Endothelial cell of umbilical vein (primary cell): ENCODE measurements at regions of chr1 and their contacts with region 1.

Region 1: DNA sequence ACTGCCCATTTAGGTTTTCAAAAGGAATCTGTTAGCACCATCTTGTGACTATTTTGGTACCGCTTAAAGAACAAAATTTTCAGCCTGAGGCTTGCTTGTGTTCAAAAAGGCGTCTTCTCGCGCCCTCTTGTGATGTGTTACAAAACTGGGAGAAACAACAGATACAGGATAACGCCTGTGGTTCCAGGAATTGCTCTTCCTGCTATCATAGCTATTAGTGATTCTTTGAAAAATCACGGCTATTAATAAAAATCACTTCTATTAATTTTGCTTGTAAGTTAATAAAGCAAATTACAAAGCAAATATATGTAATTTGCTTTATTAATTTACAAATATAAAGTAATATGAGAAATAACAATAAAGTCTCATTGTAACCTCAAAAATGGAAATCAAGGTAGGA is 82.2 kb upstream of the ABCD3 start:
- DNase-seq: peak; percentile 94
- H3K4me3 ChIP-seq: no peak overlapping the region
- H3K27ac ChIP-seq: no peak overlapping the region
- H3K4me1 ChIP-seq: peaks cover 5% of the 10 kb centered on the region
- H3K27me3 ChIP-seq: peaks cover 4 to 5% of the 10 kb centered on the region in 2 experiments
- CTCF ChIP-seq: peak; percentile 73 to 89
- POLR2A ChIP-seq: no peak

Region 2: DNA sequence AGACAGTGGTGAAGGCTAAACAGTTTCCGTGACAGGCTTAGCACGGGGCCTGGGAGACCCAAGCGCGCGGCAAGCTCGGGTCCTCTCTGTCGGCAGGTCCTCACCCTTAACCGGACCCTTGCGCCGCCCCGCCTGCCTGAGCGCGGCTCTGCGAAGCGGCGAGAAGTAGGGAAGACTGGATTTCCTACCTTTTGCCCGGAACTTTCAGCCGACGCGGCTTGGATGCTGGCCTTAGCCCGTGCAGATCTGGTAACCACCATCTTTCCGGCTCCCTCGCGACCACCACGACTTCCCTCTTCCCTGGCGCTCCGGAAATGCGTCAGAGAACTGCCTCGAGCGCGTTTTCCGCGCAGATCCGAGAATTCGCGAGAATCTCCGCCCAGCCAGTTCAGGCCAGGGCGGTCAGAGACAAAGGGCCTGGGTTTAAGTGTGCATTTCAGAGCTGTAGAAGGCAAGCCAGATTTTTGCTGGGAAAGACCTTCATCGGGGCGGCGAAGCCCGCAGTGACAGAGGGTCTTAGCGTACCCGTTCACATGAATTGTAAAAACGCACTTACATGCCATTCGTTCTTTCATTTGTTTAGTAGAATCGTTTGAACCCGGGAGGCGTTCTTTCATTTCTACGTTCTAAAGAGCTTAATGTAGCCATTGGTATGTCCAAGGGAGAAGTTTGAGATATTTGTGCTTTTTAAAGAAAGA is 456.9 kb before region 1 on chr1 and contains the start of gene DNTTIP2:
- CTCF ChIA-PET with region 1: interaction called, 10 read pairs
- POLR2A ChIA-PET with region 1: interaction called, 3 read pairs
- dilution Hi-C with region 1: no loop called
- intact Hi-C with region 1: loop called (anchors 5 kb)
- DNase-seq: peak; percentile 93
- H3K4me3 ChIP-seq: peak within 1 kb of the TSS; percentile 68 to 94 (median 71)
- H3K27ac ChIP-seq: peak within 1 kb of the TSS; percentile 79
- H3K4me1 ChIP-seq: peaks cover 30% of the 10 kb centered on the region
- H3K27me3 ChIP-seq: no peaks in the 10 kb centered on the region
- CTCF ChIP-seq: no peak
- POLR2A ChIP-seq: peak; percentile 90
- total RNA-seq, gene DNTTIP2: 53.7 and 55.5 TPM in 2 replicates

Region 3: DNA sequence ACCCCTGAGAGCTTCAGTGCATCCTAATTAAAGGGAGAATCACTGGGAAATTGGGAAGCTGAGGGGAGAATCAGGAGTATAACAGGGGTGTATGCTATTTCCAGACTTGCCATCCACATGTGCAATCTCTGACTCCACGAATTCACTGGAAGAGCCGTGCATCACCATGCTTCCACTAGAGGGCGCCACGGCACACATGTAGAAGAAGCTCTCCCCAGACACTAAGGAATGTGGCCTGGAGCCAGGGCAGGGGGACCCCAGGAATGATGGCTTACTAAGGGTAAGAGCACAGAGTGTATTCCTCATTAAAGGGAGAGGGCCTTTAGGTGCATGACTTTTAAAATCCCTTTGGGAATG is 296.5 kb before region 1 on chr1:
- CTCF ChIA-PET with region 1: interaction called, 1,439 read pairs
- POLR2A ChIA-PET with region 1: interaction called, 6 read pairs
- dilution Hi-C with region 1: no loop called
- intact Hi-C with region 1: loop called (anchors 1 kb)
- DNase-seq: peak; percentile 88
- H3K4me3 ChIP-seq: no peak overlapping the region
- H3K27ac ChIP-seq: peak overlapping the region; percentile 98
- H3K4me1 ChIP-seq: peaks cover 43% of the 10 kb centered on the region
- H3K27me3 ChIP-seq: no peaks in the 10 kb centered on the region
- CTCF ChIP-seq: peak; percentile 86 to 97
- POLR2A ChIP-seq: no peak

Region 4: DNA sequence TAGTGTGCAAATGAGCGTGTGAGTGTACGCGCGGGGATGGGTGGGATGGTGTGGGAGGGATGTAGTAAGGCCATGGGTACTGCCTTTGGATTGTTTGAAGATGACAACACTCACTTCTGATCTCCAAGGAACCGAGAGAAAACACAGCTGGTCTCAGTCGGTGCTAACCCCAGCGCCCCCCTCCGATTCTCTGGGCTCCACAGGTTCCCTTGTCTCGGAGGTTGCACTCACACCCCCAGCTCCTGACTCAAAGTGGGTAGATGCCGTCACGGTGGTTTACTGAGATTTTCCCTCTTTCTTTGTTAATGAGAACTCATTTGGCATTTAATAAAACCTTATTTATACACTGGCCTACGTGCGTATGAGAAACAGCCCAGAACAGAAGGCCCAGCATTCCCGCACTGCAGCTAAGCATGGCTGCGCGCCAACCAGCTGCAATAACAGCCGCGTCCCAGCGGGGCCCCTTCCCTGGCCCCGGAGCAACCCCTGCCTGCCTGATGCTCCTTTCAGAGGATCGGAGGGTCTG is 240.8 kb before region 1 on chr1:
- CTCF ChIA-PET with region 1: interaction called, 10 read pairs
- POLR2A ChIA-PET with region 1: no interaction called
- dilution Hi-C with region 1: no loop called
- intact Hi-C with region 1: no loop called
- DNase-seq: peak; percentile 97
- H3K4me3 ChIP-seq: no peak overlapping the region
- H3K27ac ChIP-seq: peak overlapping the region; percentile 91
- H3K4me1 ChIP-seq: peaks cover 56% of the 10 kb centered on the region
- H3K27me3 ChIP-seq: no peaks in the 10 kb centered on the region
- CTCF ChIP-seq: no peak
- POLR2A ChIP-seq: peak; percentile 5

Region 5: GRCh38 chr1:94186946-94187345 is 149.0 kb before region 1 on chr1:
- CTCF ChIA-PET with region 1: interaction called, 41 read pairs
- POLR2A ChIA-PET with region 1: no interaction called
- dilution Hi-C with region 1: no loop called
- intact Hi-C with region 1: loop called (anchors 5 kb)
- DNase-seq: no peak
- H3K4me3 ChIP-seq: no peak overlapping the region
- H3K27ac ChIP-seq: peak overlapping the region; percentile 5
- H3K4me1 ChIP-seq: peaks cover 25% of the 10 kb centered on the region
- H3K27me3 ChIP-seq: no peaks in the 10 kb centered on the region
- CTCF ChIP-seq: no peak
- POLR2A ChIP-seq: no peak

Region 6: DNA sequence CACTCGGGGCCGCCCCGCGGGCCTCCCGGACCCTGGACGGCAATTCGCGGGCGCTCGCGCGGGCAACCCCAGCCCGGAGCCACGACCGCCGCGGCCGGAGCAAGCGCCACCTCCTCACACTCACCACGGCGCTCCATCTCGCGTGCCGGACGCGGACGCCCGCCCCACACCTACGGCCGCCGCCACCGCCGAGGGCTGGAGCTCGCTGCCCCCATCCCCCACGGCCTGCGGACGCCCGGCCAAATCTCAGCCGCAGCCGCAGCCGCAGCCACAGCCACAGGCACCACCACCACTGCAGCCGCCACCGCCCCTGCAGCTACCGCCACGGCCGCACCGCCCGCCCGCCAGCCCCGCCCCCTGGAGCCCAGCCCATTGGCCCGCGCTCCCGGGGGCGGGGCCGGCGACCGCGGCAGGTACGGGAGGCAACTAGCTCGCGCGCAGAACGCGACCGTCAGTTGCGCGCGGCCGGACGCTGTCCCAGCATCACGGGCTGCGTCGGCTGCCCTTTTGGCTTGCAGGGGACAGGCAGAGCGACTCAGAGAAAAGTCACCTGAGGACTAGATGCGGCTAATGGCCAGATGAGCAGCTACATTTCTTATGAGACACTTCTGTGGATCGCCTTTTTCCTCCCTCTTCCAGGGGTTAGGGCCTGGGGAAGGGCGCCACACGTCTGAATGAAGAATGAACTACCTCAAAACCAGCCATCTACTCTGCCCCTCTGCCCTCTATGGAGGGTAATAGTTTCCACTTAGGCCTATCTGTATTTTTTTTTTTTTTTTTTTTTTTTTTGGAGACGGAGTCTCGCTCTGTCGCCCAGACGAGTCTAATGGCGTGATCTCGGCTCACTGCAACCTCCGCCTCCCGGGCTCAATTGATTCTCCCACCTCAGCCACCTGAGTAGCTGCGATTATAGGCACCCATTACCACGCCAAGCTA is 98.4 kb before region 1 on chr1 and contains the start of gene ARHGAP29:
- CTCF ChIA-PET with region 1: interaction called, 91 read pairs
- POLR2A ChIA-PET with region 1: interaction called, 6 read pairs
- dilution Hi-C with region 1: no loop called
- intact Hi-C with region 1: no loop called
- DNase-seq: peak; percentile 86
- H3K4me3 ChIP-seq: peak within 1 kb of the TSS; percentile 88 to 100 (median 95)
- H3K27ac ChIP-seq: peak within 1 kb of the TSS; percentile 93
- H3K4me1 ChIP-seq: peaks cover 67% of the 10 kb centered on the region
- H3K27me3 ChIP-seq: no peaks in the 10 kb centered on the region
- CTCF ChIP-seq: no peak
- POLR2A ChIP-seq: peak; percentile 83
- total RNA-seq, gene ARHGAP29: 199 and 215 TPM in 2 replicates

Region 7: DNA sequence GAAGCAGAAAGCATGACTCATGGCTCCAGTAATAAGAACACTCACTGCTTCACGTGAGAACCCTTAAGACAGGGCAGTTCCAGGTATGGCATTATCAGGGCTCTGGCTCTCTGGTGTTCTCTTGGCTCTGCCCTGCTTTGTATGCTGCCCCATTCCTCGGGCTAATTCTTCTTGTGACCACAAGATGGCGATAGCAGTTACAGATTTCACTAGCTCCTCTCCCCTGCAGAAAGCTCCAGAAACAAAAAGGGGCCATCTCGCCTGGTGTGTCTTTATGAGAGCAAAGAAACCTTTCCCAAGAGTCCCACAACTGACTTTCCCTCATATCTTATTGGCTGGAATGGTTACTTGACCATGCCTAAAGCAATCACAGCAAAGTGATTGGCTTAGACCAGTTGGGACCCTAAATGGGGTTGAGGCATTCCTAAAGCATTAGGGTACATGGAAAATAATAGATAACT is 145.6 kb after region 1 on chr1:
- CTCF ChIA-PET with region 1: no interaction called
- POLR2A ChIA-PET with region 1: no interaction called
- dilution Hi-C with region 1: no loop called
- intact Hi-C with region 1: no loop called
- DNase-seq: peak; percentile 67
- H3K4me3 ChIP-seq: no peak overlapping the region
- H3K27ac ChIP-seq: no peak overlapping the region
- H3K4me1 ChIP-seq: no peaks in the 10 kb centered on the region
- H3K27me3 ChIP-seq: no peaks in the 10 kb centered on the region
- CTCF ChIP-seq: peak; percentile 83 to 86
- POLR2A ChIP-seq: no peak